ENCODE measurements at regions of chr20 and their contacts with region 1.

Region 1: GRCh38 chr20:34753706-34754461 is 49.7 kb downstream of the TP53INP2 start:
- DNase-seq: no peak
- ATAC-seq: no peak
- H3K4me3 ChIP-seq: no peak overlapping the region
- H3K27ac ChIP-seq: no peak overlapping the region
- H3K4me1 ChIP-seq: no peaks in the 10 kb centered on the region
- H3K27me3 ChIP-seq: no peaks in the 10 kb centered on the region
- CTCF ChIP-seq: peak in 3 of 9 donors; percentile 19 to 27 (median 23)

Region 2: DNA sequence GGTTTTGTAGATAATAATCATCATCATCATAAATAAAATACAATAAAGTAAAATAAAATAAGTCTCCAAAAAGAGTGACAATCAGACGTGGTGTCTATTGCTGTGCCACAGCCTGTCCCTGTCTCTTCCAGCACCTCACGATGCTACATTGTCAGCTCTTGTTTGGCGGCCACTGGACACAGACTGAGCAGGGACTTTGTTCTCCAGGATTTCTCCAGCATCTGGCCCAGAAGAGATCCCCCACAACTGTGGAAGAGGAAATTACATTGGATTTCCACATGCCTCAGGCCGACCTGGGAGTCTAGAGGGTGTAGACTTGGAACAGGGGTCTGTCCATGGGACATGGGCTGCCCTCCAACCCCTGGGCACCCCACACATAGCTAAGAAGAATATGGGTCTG is 799.4 kb before region 1 on chr20:
- intact Hi-C with region 1: no loop called
- DNase-seq: no peak
- ATAC-seq: no peak
- H3K4me3 ChIP-seq: no peak overlapping the region
- H3K27ac ChIP-seq: no peak overlapping the region
- H3K4me1 ChIP-seq: no peaks in the 10 kb centered on the region
- H3K27me3 ChIP-seq: no peaks in the 10 kb centered on the region
- CTCF ChIP-seq: no peak

Region 3: GRCh38 chr20:34190679-34191090 is 563.2 kb before region 1 on chr20:
- intact Hi-C with region 1: loop called in 1 of 10 experiments (anchors 10 kb)
- DNase-seq: peak; percentile 40 to 52
- ATAC-seq: peak; percentile 82 to 96 (median 91)
- H3K4me3 ChIP-seq: no peak overlapping the region
- H3K27ac ChIP-seq: no peak overlapping the region
- H3K4me1 ChIP-seq: peaks cover 0 to 9% (median 0%) of the 10 kb centered on the region in 9 donors
- H3K27me3 ChIP-seq: peaks cover 0 to 7% (median 0%) of the 10 kb centered on the region in 7 donors
- CTCF ChIP-seq: peak; percentile 38 to 77 (median 66)

Region 4: GRCh38 chr20:34350095-34350494 is 403.8 kb before region 1 on chr20:
- intact Hi-C with region 1: no loop called
- DNase-seq: no peak
- ATAC-seq: no peak
- H3K4me3 ChIP-seq: no peak overlapping the region
- H3K27ac ChIP-seq: no peak overlapping the region
- H3K4me1 ChIP-seq: no peaks in the 10 kb centered on the region
- H3K27me3 ChIP-seq: no peaks in the 10 kb centered on the region
- CTCF ChIP-seq: no peak

Region 5: DNA sequence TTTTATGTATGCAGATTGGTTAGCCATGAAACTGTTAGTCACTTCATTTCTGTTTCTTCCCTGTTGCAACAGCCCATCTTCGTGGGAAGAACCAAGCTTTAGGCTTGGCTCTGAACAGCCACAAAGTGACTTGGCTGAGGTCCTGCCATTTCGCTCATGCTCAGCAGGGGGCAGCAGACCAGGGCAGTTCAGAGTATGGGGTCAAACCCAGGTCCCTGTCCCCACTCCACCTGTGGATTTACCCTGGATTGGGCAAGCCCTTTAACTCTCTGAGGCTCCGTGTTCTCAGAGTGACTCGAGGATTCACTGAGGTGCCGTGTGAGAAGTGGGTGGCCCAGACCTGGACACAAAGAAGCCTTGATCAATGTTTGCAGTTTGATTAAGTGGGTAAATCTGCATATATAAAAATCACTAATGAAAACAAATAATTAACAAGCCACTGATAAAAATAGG is 215.2 kb before region 1 on chr20:
- intact Hi-C with region 1: loop called in 1 of 10 experiments (anchors 10 kb)
- DNase-seq: peak in 1 of 2 donors; percentile 49
- ATAC-seq: peak in 7 of 8 donors; percentile 14 to 68 (median 51)
- H3K4me3 ChIP-seq: no peak overlapping the region
- H3K27ac ChIP-seq: peak overlapping the region in 1 of 10 donors; percentile 10
- H3K4me1 ChIP-seq: peaks cover 0 to 26% (median 10%) of the 10 kb centered on the region in 9 donors
- H3K27me3 ChIP-seq: no peaks in the 10 kb centered on the region
- CTCF ChIP-seq: peak; percentile 47 to 84 (median 79)

Region 6: GRCh38 chr20:34689486-34689885 is 64.4 kb before region 1 on chr20:
- intact Hi-C with region 1: no loop called
- DNase-seq: no peak
- ATAC-seq: peak in 3 of 8 donors; percentile 46 to 65 (median 61)
- H3K4me3 ChIP-seq: no peak overlapping the region
- H3K27ac ChIP-seq: peak overlapping the region in 1 of 10 donors; percentile 23
- H3K4me1 ChIP-seq: peaks cover 0 to 6% (median 0%) of the 10 kb centered on the region in 9 donors
- H3K27me3 ChIP-seq: no peaks in the 10 kb centered on the region
- CTCF ChIP-seq: no peak

Region 7: GRCh38 chr20:34842143-34842542 is 88.3 kb after region 1 on chr20:
- intact Hi-C with region 1: no loop called
- DNase-seq: no peak
- ATAC-seq: no peak
- H3K4me3 ChIP-seq: no peak overlapping the region
- H3K27ac ChIP-seq: no peak overlapping the region
- H3K4me1 ChIP-seq: no peaks in the 10 kb centered on the region
- H3K27me3 ChIP-seq: no peaks in the 10 kb centered on the region
- CTCF ChIP-seq: no peak